ENCODE measurements at regions of chr7 and their contacts with region 1.

Region 1: GRCh38 chr7:13262929-13263530 is 575.6 kb downstream of the ARL4A start:
- DNase-seq: no peak
- ATAC-seq: peak; percentile 47
- H3K4me3 Mint-ChIP-seq: no peak overlapping the region
- H3K27ac Mint-ChIP-seq: no peak overlapping the region
- H3K4me1 Mint-ChIP-seq: no peaks in the 10 kb centered on the region
- H3K27me3 Mint-ChIP-seq: peaks cover 6% of the 10 kb centered on the region
- CTCF ChIP-seq: peak; percentile 57

Region 2: DNA sequence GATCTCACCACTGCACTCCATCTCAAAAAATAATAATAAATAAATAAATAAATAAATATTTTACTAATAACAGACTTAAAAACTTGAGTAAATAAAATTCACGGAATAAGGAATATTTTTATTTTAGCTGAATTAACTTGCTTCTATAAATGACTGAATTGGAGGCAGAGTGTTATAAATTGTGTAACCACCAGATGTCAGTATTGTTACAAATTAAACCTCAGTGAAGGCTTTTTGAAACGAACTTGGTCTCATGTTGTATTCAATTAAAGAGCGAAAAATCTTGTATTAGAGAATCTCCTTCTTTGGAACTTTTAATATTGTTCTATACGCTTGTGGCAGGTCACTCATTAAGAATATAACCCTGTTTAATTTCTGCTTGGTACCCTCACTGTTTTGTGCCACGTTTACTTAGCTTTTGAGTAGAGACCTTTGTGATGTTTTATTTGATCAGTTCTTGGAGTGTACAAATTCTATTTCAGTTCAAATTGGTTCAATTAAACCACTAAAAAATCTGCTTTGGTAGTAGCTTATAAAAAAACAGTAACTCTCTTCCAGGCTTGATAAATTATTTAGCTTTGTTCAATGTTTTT is 738.1 kb before region 1 on chr7:
- CTCF ChIA-PET with region 1: interaction called, 5 read pairs
- POLR2A ChIA-PET with region 1: no interaction called
- intact Hi-C with region 1: loop called (anchors 5 kb)
- DNase-seq: no peak
- ATAC-seq: peak; percentile 42
- H3K4me3 Mint-ChIP-seq: no peak overlapping the region
- H3K27ac Mint-ChIP-seq: no peak overlapping the region
- H3K4me1 Mint-ChIP-seq: no peaks in the 10 kb centered on the region
- H3K27me3 Mint-ChIP-seq: peaks cover 8% of the 10 kb centered on the region
- CTCF ChIP-seq: peak; percentile 84

Region 3: GRCh38 chr7:12638851-12639467 is 624.1 kb before region 1 on chr7:
- CTCF ChIA-PET with region 1: interaction called, 3 read pairs
- POLR2A ChIA-PET with region 1: no interaction called
- intact Hi-C with region 1: loop called (anchors 2 kb)
- DNase-seq: no peak
- ATAC-seq: no peak
- H3K4me3 Mint-ChIP-seq: no peak overlapping the region
- H3K27ac Mint-ChIP-seq: no peak overlapping the region
- H3K4me1 Mint-ChIP-seq: peaks cover 2% of the 10 kb centered on the region
- H3K27me3 Mint-ChIP-seq: peaks cover 3% of the 10 kb centered on the region
- CTCF ChIP-seq: peak; percentile 67

Region 4: DNA sequence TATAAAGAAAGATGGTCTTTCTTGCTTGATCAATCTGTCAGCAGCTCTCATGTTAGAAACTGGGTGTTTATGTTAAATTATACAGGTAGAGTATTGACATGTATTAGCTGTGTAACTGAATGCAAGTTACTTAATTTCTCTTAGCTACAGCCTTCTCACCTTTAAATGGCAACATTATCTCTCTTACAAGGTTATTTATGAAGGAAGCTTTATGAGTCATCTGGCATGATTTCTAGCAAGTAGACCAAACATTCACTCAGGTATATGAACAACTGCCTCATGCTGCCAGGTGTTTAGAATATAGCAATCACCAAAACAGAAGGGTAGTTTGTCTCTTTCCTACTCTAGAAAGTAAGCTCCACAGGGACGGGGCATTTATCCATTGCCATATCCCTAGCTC is 567.1 kb before region 1 on chr7:
- CTCF ChIA-PET with region 1: no interaction called
- POLR2A ChIA-PET with region 1: no interaction called
- intact Hi-C with region 1: loop called (anchors 5 kb)
- DNase-seq: no peak
- ATAC-seq: no peak
- H3K4me3 Mint-ChIP-seq: no peak overlapping the region
- H3K27ac Mint-ChIP-seq: no peak overlapping the region
- H3K4me1 Mint-ChIP-seq: peaks cover 13% of the 10 kb centered on the region
- H3K27me3 Mint-ChIP-seq: no peaks in the 10 kb centered on the region
- CTCF ChIP-seq: no peak

Region 5: DNA sequence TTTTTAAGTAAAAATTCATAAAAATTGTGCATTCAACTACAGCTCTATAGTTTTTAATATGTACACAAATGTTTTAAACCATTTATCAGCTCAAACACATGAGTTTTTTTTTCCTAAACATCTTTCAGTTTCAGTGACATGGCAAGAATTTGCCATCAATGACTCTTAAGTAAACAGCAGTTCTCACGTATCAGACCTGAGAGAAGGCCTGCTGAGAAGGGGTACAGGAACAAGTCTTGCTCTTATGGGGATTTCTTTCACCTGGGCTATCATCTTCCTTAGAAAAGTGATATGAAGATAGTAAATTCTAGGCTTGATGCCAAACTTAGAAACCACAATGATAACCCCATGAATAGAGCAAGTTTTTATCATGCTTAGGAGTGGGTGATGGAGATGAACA is 107.8 kb before region 1 on chr7:
- CTCF ChIA-PET with region 1: no interaction called
- POLR2A ChIA-PET with region 1: no interaction called
- intact Hi-C with region 1: no loop called
- DNase-seq: no peak
- ATAC-seq: no peak
- H3K4me3 Mint-ChIP-seq: no peak overlapping the region
- H3K27ac Mint-ChIP-seq: no peak overlapping the region
- H3K4me1 Mint-ChIP-seq: no peaks in the 10 kb centered on the region
- H3K27me3 Mint-ChIP-seq: no peaks in the 10 kb centered on the region
- CTCF ChIP-seq: no peak

Region 6: DNA sequence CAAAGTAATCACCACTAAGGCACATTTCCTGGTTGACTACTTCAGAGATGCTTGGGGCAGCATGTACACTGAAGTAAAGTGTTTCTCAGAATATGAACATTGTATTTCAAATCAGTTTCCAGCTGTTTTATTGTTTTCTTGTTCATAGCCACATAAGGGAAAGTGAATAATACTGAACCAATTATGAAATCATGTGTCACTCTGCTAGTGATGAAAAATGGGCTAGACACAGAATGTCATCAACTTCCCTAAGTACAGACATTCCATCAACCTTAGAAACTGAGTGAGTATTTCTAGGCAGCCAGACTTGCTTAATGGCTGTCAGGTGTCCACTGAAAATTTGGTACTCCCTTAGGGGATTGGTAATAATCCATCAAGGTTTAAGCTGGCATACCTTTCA is 27.9 kb after region 1 on chr7:
- CTCF ChIA-PET with region 1: no interaction called
- POLR2A ChIA-PET with region 1: no interaction called
- intact Hi-C with region 1: no loop called
- DNase-seq: no peak
- ATAC-seq: no peak
- H3K4me3 Mint-ChIP-seq: no peak overlapping the region
- H3K27ac Mint-ChIP-seq: no peak overlapping the region
- H3K4me1 Mint-ChIP-seq: no peaks in the 10 kb centered on the region
- H3K27me3 Mint-ChIP-seq: peaks cover 5% of the 10 kb centered on the region
- CTCF ChIP-seq: no peak

Region 7: DNA sequence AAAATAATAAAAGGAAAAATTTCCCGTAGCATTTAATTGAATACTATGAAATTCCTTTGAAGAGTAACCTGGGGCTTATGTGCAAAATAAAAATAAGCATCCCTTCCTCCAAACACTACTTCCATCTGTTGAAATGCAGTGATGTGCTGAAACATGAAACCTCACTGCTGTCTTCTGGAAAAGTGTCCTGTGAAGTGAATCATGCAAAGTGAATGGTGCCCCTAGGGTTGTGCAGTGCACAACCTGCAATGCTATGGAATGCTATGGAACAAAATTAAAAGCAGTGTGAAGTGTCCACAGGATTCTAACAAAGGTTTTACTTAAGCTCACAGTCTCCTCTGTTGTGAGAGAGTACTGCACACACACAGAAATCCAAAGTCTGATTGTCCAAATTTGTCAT is 245.6 kb after region 1 on chr7:
- CTCF ChIA-PET with region 1: no interaction called
- POLR2A ChIA-PET with region 1: no interaction called
- intact Hi-C with region 1: no loop called
- DNase-seq: no peak
- ATAC-seq: no peak
- H3K4me3 Mint-ChIP-seq: no peak overlapping the region
- H3K27ac Mint-ChIP-seq: no peak overlapping the region
- H3K4me1 Mint-ChIP-seq: no peaks in the 10 kb centered on the region
- H3K27me3 Mint-ChIP-seq: no peaks in the 10 kb centered on the region
- CTCF ChIP-seq: no peak